ENCODE measurements at regions of chr18 and their contacts with region 1.

Region 1: DNA sequence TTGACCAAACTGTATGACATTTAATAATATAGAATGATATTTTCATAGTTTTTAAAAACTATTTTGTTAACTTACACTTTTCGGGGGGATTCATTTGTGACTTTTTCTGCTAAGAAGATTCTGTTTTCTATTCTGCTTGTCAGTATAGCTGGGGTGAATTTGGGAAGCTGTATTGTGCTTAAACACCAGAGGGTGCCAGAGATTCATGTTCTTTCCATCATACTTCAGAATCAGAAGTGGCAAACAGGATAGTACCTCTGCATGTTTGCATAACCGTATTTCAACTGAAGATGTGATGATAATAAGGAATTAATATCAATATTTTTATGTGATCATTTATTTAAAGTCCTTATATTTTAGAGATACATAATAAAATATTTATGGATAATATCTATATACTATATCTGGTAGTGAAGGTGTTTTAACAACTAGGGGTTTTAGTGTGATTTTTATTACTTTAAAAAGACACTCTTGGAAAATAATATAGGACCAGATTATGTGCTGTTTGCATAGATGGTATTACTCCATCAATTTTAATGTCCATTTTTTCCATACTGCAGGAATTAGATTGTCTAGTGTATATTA is 81.0 kb downstream of the TAF4B start:
- DNase-seq: no peak
- H3K4me3 Mint-ChIP-seq: no peak overlapping the region
- H3K27ac Mint-ChIP-seq: no peak overlapping the region
- H3K4me1 Mint-ChIP-seq: no peaks in the 10 kb centered on the region
- H3K27me3 Mint-ChIP-seq: no peaks in the 10 kb centered on the region

Region 2: DNA sequence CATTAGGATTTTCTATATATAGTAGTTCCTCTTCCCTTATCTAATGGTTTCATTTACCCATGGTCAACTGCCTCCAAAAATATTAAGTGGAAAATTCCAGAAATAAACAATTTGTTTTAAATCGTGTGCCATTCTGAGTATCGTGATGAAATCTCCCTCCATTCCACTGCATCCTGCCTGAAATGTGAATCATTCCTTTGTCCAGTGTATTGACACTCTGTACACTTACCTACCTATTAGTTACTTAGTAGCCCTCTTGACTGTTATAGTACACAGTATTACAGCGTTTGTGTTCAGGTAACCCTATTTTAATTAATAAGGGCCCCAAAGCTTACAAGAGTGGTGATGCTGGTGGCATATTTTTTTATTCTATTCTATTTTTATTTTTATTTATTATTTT is 54.9 kb before region 1 on chr18:
- intact Hi-C with region 1: no loop called
- DNase-seq: no peak
- H3K4me3 Mint-ChIP-seq: no peak overlapping the region
- H3K27ac Mint-ChIP-seq: no peak overlapping the region
- H3K4me1 Mint-ChIP-seq: peaks cover 12% of the 10 kb centered on the region
- H3K27me3 Mint-ChIP-seq: no peaks in the 10 kb centered on the region

Region 3: DNA sequence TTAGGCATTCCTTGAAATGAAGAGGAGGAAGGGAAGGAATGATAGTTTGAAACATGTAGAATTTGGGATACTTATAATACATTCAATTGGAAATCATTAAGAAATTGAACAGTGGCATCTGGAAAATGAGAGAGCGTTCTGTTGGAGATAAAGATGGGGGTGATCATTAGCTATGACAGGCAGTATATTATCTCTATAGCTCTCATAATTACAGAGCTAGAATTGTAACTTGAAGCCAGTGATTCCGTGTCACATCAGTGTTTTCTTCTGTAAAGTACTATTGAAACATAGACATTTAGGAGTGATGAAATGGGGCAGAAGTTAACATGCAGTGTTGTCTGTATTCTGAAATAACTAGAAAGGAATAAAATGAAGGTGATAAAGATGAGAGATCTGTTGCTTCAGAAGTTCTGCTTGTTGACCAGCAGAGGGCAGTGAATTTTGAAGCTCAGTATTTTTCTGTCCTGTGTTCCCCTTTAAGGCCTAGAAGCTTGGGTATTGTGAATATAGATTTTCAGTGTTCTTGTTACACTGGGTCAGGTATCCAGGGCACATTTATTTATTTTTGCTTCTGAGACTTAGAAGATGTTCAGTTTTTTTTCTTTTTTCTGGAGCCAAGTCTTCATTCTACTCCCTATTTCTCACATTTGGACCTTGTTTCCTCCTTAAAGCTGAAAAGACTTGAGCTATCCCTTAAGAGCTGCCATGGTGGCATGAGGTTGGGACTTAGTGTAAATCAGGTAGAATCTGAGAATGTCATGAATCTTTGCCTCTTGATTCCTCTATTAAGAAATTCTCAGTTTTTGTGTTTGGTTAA is 76.4 kb after region 1 on chr18:
- intact Hi-C with region 1: loop called (anchors 5 kb)
- DNase-seq: no peak
- H3K4me3 Mint-ChIP-seq: no peak overlapping the region
- H3K27ac Mint-ChIP-seq: no peak overlapping the region
- H3K4me1 Mint-ChIP-seq: no peaks in the 10 kb centered on the region
- H3K27me3 Mint-ChIP-seq: no peaks in the 10 kb centered on the region

Measured in activated T-helper 1 cell treated with anti-CD3 and anti-CD28 coated beads, Interleukin-12 subunit alpha, Interleukin-12 subunit beta, Interleukin-2, Interleukin-4 antibody, amounts not matched to agents 30 ng/mL and 10 ng/mL and 1 ng/mL, durations not matched to agents 14 hours and 24 hours and 36 hours (primary cell).